ENCODE measurements at regions of chr1 and their contacts with region 1.

Region 1: GRCh38 chr1:36223993-36224536 is at the start of gene THRAP3:
- DNase-seq: peak; percentile 99 to 100 (median 100)
- ATAC-seq: peak; percentile 86
- H3K4me3 ChIP-seq: peak within 1 kb of the TSS; percentile 86 to 87
- H3K4me3 Mint-ChIP-seq: peak within 1 kb of the TSS; percentile 97
- H3K27ac ChIP-seq: peak within 1 kb of the TSS; percentile 97 to 100
- H3K27ac Mint-ChIP-seq: peak within 1 kb of the TSS; percentile 100
- H3K4me1 ChIP-seq: peaks cover 34% of the 10 kb centered on the region
- H3K4me1 Mint-ChIP-seq: peaks cover 34% of the 10 kb centered on the region
- H3K27me3 ChIP-seq: no peaks in the 10 kb centered on the region
- H3K27me3 Mint-ChIP-seq: no peaks in the 10 kb centered on the region
- CTCF ChIP-seq: no peak
- total RNA-seq, gene THRAP3: 83.2 to 88.4 TPM

Region 2: DNA sequence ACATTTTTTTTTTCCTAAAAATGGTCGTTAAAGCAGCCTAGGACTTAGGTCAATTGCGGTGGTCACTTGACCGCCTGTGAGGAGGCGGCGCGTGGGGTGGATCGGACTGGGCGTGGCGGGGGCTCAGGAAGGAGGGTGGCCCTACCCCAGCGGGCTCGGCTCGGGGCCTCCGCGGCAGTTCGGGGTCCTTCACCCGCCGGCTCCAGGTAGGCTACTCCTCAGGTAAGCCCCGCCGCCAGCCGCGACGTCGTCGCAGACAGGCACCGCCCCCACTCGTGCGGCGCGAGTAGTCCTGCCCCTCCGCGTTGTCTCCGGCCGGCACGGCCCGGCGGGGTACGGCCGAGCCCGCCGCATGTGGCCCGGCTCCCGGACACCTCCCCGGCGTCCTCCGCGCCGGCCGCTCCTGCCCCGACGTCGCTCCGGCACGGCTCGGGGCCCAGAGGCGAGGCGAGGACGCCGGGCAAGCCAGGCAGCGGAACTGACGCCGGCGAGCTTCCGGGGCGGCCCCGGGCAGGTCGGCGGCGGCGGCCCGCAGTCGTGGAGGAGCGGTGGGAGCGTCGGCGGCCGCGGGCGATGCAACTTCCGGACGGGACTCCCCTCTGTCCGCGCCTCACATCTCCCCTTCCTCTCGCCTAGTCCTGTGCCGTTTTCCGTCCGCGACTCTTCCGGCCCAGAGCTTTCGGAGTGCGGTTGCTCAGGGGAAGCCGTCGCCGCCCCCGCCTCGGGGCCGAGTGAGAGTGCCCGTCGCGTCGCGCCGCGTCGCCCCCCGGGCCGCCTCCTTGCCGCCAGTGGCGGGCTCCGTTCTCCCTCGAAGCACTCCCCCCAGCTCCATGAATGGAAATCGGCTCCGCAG is 293.2 kb before region 1 on chr1 and contains the start of gene AGO3:
- CTCF ChIA-PET with region 1: no interaction called
- POLR2A ChIA-PET with region 1: interaction called, 6 read pairs
- intact Hi-C with region 1: loop called (anchors 1 kb)
- DNase-seq: peak; percentile 70 to 97 (median 84)
- ATAC-seq: peak; percentile 79
- H3K4me3 ChIP-seq: peak within 1 kb of the TSS; percentile 66 to 93
- H3K4me3 Mint-ChIP-seq: peak within 1 kb of the TSS; percentile 94
- H3K27ac ChIP-seq: peak within 1 kb of the TSS; percentile 96
- H3K27ac Mint-ChIP-seq: peak within 1 kb of the TSS; percentile 98
- H3K4me1 ChIP-seq: peaks cover 28% of the 10 kb centered on the region
- H3K4me1 Mint-ChIP-seq: peaks cover 35% of the 10 kb centered on the region
- H3K27me3 ChIP-seq: no peaks in the 10 kb centered on the region
- H3K27me3 Mint-ChIP-seq: no peaks in the 10 kb centered on the region
- CTCF ChIP-seq: no peak
- total RNA-seq, gene AGO3: 27.6 to 30.2 TPM

Region 3: GRCh38 chr1:36155408-36156328 is 68.4 kb before region 1 on chr1 and contains the start of gene MAP7D1:
- CTCF ChIA-PET with region 1: interaction called, 23 read pairs
- POLR2A ChIA-PET with region 1: interaction called, 49 read pairs
- intact Hi-C with region 1: loop called in 1 of 2 experiments (anchors 2 kb)
- DNase-seq: peak; percentile 69 to 94 (median 88)
- ATAC-seq: peak; percentile 74
- H3K4me3 ChIP-seq: peak within 1 kb of the TSS; percentile 92 to 97
- H3K4me3 Mint-ChIP-seq: peak within 1 kb of the TSS; percentile 89
- H3K27ac ChIP-seq: peak within 1 kb of the TSS; percentile 92 to 97
- H3K27ac Mint-ChIP-seq: peak within 1 kb of the TSS; percentile 94
- H3K4me1 ChIP-seq: peaks cover 75% of the 10 kb centered on the region
- H3K4me1 Mint-ChIP-seq: peaks cover 71% of the 10 kb centered on the region
- H3K27me3 ChIP-seq: no peaks in the 10 kb centered on the region
- H3K27me3 Mint-ChIP-seq: no peaks in the 10 kb centered on the region
- CTCF ChIP-seq: no peak
- total RNA-seq, gene MAP7D1: 113 to 117 TPM

Region 4: GRCh38 chr1:36285448-36286101 is 61.5 kb after region 1 on chr1:
- CTCF ChIA-PET with region 1: interaction called, 8 read pairs
- POLR2A ChIA-PET with region 1: interaction called, 5 read pairs
- intact Hi-C with region 1: loop called (anchors 5 kb)
- DNase-seq: peak; percentile 32 to 91 (median 65)
- ATAC-seq: peak; percentile 98
- H3K4me3 ChIP-seq: no peak overlapping the region
- H3K4me3 Mint-ChIP-seq: no peak overlapping the region
- H3K27ac ChIP-seq: no peak overlapping the region
- H3K27ac Mint-ChIP-seq: peak overlapping the region; percentile 9
- H3K4me1 ChIP-seq: peaks cover 4% of the 10 kb centered on the region
- H3K4me1 Mint-ChIP-seq: peaks cover 11% of the 10 kb centered on the region
- H3K27me3 ChIP-seq: no peaks in the 10 kb centered on the region
- H3K27me3 Mint-ChIP-seq: no peaks in the 10 kb centered on the region
- CTCF ChIP-seq: peak; percentile 68

Region 5: DNA sequence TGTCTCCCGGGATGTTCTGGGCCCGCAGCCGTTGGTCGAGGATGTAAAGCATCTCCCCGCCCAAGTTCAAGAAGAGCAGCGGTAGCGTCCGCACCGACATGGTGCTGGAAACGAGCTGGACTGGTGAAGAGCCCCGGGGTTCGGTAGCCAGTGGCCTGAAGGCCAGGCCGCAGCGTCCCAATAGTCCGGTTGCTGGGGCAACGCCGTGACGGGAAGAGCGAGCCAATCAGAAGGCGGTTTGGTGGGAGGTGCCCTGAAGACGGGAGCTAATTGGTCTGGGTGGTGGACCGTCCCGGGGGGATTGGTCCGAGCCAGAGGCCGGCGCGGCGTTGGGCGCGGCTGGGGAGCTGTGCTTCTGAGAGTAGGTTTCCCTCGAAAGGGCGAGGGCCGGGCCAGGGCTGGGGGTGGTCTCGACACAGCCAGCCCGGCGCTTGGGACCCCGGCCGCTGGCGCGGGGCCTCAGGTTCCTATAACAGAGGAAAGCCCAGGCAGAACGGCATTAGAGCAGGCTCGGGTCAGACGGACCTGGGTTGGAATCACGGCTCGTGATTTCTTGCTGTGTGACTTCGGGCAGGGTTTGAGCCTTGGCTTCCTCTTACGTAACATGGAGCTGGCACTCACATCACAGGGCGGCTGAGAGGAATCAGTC is 226.3 kb after region 1 on chr1 and contains the start of gene OSCP1:
- CTCF ChIA-PET with region 1: no interaction called
- POLR2A ChIA-PET with region 1: no interaction called
- intact Hi-C with region 1: loop called in 1 of 2 experiments (anchors 2 kb)
- DNase-seq: peak; percentile 74 to 94 (median 84)
- ATAC-seq: peak; percentile 97
- H3K4me3 ChIP-seq: peak within 1 kb of the TSS; percentile 74 to 76
- H3K4me3 Mint-ChIP-seq: peak within 1 kb of the TSS; percentile 95
- H3K27ac ChIP-seq: peak within 1 kb of the TSS; percentile 83 to 90
- H3K27ac Mint-ChIP-seq: peak within 1 kb of the TSS; percentile 98
- H3K4me1 ChIP-seq: peaks cover 5% of the 10 kb centered on the region
- H3K4me1 Mint-ChIP-seq: peaks cover 17% of the 10 kb centered on the region
- H3K27me3 ChIP-seq: no peaks in the 10 kb centered on the region
- H3K27me3 Mint-ChIP-seq: no peaks in the 10 kb centered on the region
- CTCF ChIP-seq: no peak
- total RNA-seq, gene OSCP1: 1.8 to 2.0 TPM

Measured in CD8-positive, alpha-beta T cell (primary cell).